ENCODE measurements at regions of chr16 and their contacts with region 1.

Region 1: GRCh38 chr16:75519881-75520280 is 16.0 kb downstream of the CHST5 start:
- DNase-seq: no peak
- H3K4me3 ChIP-seq: no peak overlapping the region
- H3K27ac ChIP-seq: no peak overlapping the region
- H3K27me3 ChIP-seq: peaks cover 3% of the 10 kb centered on the region
- CTCF ChIP-seq: no peak

Region 2: GRCh38 chr16:75471723-75472633 is 47.9 kb before region 1 on chr16:
- CTCF ChIA-PET with region 1: interaction called, 34 read pairs
- POLR2A ChIA-PET with region 1: no interaction called
- DNase-seq: peak; percentile 24
- H3K4me3 ChIP-seq: no peak overlapping the region
- H3K27ac ChIP-seq: no peak overlapping the region
- H3K27me3 ChIP-seq: no peaks in the 10 kb centered on the region
- CTCF ChIP-seq: peak; percentile 78

Region 3: DNA sequence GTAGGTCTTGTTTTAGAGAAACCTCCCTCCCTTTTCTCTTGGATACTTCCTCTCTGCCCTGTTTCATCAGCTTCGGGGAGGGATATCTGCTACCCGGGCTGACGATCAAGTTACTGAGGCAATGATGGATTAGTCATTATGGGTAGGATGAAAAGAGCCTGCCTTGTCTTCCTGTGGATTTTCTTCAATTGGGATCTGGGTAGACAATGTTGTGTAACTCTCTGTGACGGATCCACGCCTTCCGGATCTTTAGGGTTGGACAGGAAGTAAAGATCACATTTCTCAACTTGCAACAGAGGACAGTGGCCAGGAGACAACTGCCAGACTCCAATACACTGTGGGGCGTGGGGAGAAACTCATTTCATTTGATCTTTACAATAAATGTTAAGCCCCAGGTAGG is 13.3 kb before region 1 on chr16:
- CTCF ChIA-PET with region 1: interaction called, 19 read pairs
- POLR2A ChIA-PET with region 1: interaction called, 4 read pairs
- DNase-seq: no peak
- H3K4me3 ChIP-seq: no peak overlapping the region
- H3K27ac ChIP-seq: no peak overlapping the region
- H3K27me3 ChIP-seq: peaks cover 3% of the 10 kb centered on the region
- CTCF ChIP-seq: no peak

Region 4: DNA sequence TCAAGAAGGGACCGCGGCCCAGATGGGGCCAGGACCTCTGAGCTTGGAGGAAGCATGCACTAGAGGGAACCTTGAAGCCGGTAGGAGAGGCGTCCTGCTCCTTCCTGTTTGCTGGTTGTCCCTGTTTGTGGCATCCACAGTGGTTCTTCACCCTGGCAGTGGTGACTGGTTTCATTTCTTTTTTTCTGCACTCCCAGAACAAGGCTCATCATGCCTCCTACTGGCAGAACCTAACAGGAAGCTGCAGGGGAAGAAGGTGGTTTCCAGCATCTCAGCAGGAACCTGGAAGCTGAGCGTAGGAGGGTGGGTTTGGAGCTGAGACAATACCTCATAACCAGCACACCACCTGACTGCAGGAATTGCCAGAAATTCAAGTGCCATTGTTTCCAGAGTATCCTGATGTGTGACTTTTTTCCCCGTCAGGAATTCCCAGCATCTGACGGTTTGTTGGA is 30.4 kb after region 1 on chr16:
- CTCF ChIA-PET with region 1: interaction called, 25 read pairs
- POLR2A ChIA-PET with region 1: interaction called, 9 read pairs
- DNase-seq: no peak
- H3K4me3 ChIP-seq: no peak overlapping the region
- H3K27ac ChIP-seq: no peak overlapping the region
- H3K27me3 ChIP-seq: no peaks in the 10 kb centered on the region
- CTCF ChIP-seq: peak; percentile 53

Region 5: GRCh38 chr16:75566040-75566810 is 46.3 kb after region 1 on chr16 and contains the start of gene GABARAPL2:
- CTCF ChIA-PET with region 1: interaction called, 31 read pairs
- POLR2A ChIA-PET with region 1: no interaction called
- DNase-seq: no peak
- H3K4me3 ChIP-seq: peak within 1 kb of the TSS; percentile 84
- H3K27ac ChIP-seq: peak within 1 kb of the TSS; percentile 39
- H3K27me3 ChIP-seq: peaks cover 8% of the 10 kb centered on the region
- CTCF ChIP-seq: no peak
- polyA plus RNA-seq, gene GABARAPL2: 70.9 and 89.8 TPM in 2 replicates

Region 6: GRCh38 chr16:75660726-75661302 is 140.9 kb after region 1 on chr16:
- CTCF ChIA-PET with region 1: interaction called, 8 read pairs
- POLR2A ChIA-PET with region 1: interaction called, 10 read pairs
- DNase-seq: no peak
- H3K4me3 ChIP-seq: no peak overlapping the region
- H3K27ac ChIP-seq: no peak overlapping the region
- H3K27me3 ChIP-seq: no peaks in the 10 kb centered on the region
- CTCF ChIP-seq: no peak